Head of caudate nucleus (tissue), 42 donors: ENCODE measurements at regions of chr12 and their contacts with region 1.

Region 1: DNA sequence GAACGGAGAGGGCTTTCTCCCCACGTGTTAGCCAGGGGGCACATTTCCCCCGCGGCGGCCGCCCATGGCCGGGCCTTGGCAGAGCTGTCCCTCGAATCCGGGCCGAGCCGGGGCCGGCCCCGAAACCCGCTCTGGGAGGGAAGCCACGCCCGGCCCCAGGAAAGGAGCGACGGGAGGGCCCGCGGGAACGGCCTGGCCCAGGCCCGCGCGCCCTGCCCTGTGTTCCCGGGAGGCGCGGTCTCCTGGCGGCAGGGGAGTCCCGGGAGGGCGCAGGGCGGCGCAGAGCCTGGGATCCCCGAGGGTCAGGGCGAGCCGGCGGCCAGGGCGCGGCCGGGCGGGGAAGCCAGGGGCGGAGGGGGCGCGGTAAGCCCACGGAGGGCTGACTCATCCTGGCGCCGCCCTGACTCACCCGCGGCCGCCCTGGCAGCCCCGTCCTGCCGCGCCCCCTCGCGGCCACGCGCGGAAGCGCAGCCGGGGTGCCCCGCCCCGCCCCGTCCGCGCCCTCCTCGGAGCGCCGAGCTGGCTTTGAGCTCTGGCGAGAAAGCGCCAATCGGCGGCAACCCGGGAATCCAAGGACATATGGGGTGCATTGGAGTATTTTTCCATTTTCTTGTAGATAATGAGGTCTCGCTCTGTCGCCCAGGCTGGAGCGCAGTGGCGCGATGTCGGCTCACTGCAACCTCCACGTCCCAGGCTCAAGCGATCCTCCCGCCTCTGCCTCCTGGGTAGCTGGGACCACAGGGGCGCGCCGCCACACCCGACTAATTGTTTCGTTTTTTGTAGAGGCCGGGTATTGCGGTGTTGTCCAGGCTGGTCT is 31.8 kb upstream of the PLEKHG6 start:
- DNase-seq: peak; percentile 22 to 92 (median 84)

Region 2: GRCh38 chr12:5889381-5890047 is 389.1 kb before region 1 on chr12:
- intact Hi-C with region 1: no loop called
- DNase-seq: peak in 1 of 42 donors; percentile 24

Region 3: GRCh38 chr12:6230321-6231110 is 48.1 kb before region 1 on chr12:
- intact Hi-C with region 1: loop called (anchors 5 kb)
- DNase-seq: peak; percentile 76 to 98 (median 92)